ENCODE measurements at regions of chr2 and their contacts with region 1.

Region 1: DNA sequence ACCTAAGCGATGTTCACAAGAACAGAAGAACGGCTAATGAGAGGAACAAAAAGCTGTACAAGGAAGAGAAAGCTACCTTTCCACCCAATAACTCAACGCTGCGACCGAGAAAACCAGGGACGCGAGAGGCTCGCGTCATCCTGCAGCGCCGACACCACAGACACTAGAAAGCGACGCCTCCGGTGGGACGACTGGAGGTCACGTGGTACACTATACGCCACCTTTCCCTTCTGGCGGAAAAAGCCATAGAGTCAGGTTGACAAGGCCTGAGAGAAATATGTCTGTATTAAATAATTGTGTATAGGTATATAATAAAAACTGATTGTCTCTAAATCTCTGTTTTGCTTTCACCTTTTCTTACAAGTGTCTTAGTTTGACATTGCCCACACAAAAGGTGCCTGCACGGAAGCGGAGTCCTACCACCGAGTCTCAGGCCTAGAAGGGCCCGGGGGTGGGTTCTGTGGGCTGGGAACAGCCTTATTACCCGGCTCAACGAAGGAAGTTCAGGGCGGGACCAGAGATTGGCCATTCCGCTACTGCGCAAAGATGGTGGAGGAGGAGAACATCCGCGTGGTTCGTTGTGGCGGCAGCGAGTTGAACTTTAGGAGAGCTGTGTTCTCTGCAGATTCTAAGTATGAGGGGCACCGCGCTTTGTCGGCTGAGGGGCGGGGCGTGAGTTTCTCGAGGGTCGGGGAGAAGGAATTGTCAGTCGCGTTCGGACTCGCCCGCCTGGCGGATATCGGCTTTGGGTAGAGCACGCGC is at the start of gene WDR75:
- DNase-seq: peak; percentile 95
- ATAC-seq: peak; percentile 99
- H3K4me3 ChIP-seq: peak within 1 kb of the TSS; percentile 90 to 94 (median 93)
- H3K27ac ChIP-seq: peak within 1 kb of the TSS; percentile 82
- H3K4me1 ChIP-seq: peaks cover 45% of the 10 kb centered on the region
- H3K27me3 ChIP-seq: no peaks in the 10 kb centered on the region; a peak in 1 of 5 replicates
- CTCF ChIP-seq: no peak
- EP300 ChIP-seq: peak in 1 of 2 experiments; percentile 52; a peak in 2 of 4 replicates
- POLR2A ChIP-seq: peak; percentile 95
- RAD21 ChIP-seq: peak; percentile 27
- total RNA-seq, gene WDR75: 74.1 and 106 TPM in 2 replicates

Region 2: DNA sequence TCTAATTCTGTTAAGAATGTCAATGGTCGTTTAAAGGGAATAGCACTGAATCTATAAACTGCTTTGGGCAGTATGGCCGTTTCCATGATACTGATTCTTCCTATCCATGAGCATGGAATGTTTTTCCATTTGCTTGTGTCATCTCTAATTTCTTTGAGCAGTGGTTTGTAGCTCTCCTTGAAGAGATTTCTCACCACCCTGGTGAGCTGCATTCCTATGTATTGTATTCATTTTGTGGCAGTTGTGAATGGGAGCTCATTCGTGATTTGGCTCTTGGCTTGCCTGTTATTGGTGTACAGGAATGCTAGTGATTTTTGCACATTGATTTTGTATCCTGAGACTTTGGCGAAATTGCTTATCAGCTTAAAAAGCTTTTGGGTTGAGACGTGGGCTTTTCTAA is 38.2 kb before region 1 on chr2:
- CTCF ChIA-PET with region 1: no interaction called
- POLR2A ChIA-PET with region 1: no interaction called
- in situ Hi-C with region 1: no loop called
- intact Hi-C with region 1: no loop called
- DNase-seq: no peak
- ATAC-seq: no peak
- H3K4me3 ChIP-seq: no peak overlapping the region
- H3K27ac ChIP-seq: no peak overlapping the region
- H3K4me1 ChIP-seq: no peaks in the 10 kb centered on the region
- H3K27me3 ChIP-seq: no peaks in the 10 kb centered on the region
- CTCF ChIP-seq: no peak
- EP300 ChIP-seq: no peak
- POLR2A ChIP-seq: no peak
- RAD21 ChIP-seq: no peak

Region 3: DNA sequence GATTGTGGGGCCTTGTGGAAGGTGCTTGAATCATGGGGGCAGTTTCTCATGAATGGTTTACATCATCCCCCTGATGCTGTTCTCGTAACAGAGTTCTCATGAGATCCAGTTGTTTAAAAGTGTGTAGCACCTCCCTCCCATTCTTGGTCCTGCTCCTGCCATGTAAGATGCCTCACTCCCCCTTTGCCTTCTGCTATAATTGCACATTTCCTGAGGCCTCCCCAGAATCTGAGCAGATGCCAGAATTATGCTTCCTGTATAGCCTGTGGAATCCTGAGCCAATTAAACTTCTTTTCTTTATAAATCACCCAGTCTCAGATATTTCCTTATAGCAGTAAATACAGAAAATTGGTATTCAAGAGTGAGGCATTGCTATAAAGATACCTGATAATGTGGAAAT is 15.5 kb before region 1 on chr2:
- CTCF ChIA-PET with region 1: no interaction called
- POLR2A ChIA-PET with region 1: interaction called, 24 read pairs
- in situ Hi-C with region 1: no loop called
- intact Hi-C with region 1: no loop called
- DNase-seq: no peak
- ATAC-seq: no peak
- H3K4me3 ChIP-seq: no peak overlapping the region
- H3K27ac ChIP-seq: no peak overlapping the region
- H3K4me1 ChIP-seq: peaks cover 29% of the 10 kb centered on the region
- H3K27me3 ChIP-seq: no peaks in the 10 kb centered on the region
- CTCF ChIP-seq: no peak
- EP300 ChIP-seq: no peak
- POLR2A ChIP-seq: no peak
- RAD21 ChIP-seq: no peak

Region 4: DNA sequence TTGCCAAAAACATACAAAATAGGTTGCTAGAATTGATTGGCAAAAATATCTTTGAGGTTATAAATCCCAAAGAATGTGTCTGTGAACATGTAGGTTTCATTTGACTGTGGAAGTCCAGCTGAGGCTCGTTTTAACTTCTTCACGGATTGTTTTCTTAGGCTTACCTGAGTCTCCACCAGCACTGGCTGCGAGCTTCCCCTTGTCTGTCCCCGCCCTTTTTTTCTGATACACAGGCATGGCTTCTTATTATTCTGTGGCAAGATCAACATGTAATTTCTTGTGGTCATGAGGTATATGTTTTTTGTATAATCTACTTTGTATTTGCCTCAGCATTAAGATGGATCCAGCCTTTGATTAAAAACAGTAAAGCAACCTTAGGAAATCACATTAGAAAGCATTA is 146.7 kb after region 1 on chr2:
- CTCF ChIA-PET with region 1: no interaction called
- POLR2A ChIA-PET with region 1: no interaction called
- in situ Hi-C with region 1: no loop called
- intact Hi-C with region 1: no loop called
- DNase-seq: no peak
- ATAC-seq: no peak
- H3K4me3 ChIP-seq: no peak overlapping the region
- H3K27ac ChIP-seq: no peak overlapping the region
- H3K4me1 ChIP-seq: peaks cover 12% of the 10 kb centered on the region
- H3K27me3 ChIP-seq: no peaks in the 10 kb centered on the region
- CTCF ChIP-seq: no peak
- EP300 ChIP-seq: no peak
- POLR2A ChIP-seq: no peak
- RAD21 ChIP-seq: no peak

Region 5: GRCh38 chr2:189783927-189784867 is 343.1 kb after region 1 on chr2 and contains the starts of genes ORMDL1 and PMS1:
- CTCF ChIA-PET with region 1: no interaction called
- POLR2A ChIA-PET with region 1: interaction called, 7 read pairs
- in situ Hi-C with region 1: no loop called
- intact Hi-C with region 1: loop called (anchors 5 kb)
- DNase-seq: peak; percentile 93
- ATAC-seq: peak; percentile 97
- H3K4me3 ChIP-seq: peak within 1 kb of the TSS; percentile 79 to 83 (median 81)
- H3K27ac ChIP-seq: peak within 1 kb of the TSS; percentile 94
- H3K4me1 ChIP-seq: peaks cover 36% of the 10 kb centered on the region
- H3K27me3 ChIP-seq: no peaks in the 10 kb centered on the region; a peak in 1 of 5 replicates
- CTCF ChIP-seq: no peak; the same call in 1 of the 2 replicates
- EP300 ChIP-seq: no peak
- POLR2A ChIP-seq: peak; percentile 95 to 98
- RAD21 ChIP-seq: peak; percentile 39; the same call in 1 of the 2 replicates
- total RNA-seq, gene ORMDL1: 29.5 and 67.5 TPM in 2 replicates
- total RNA-seq, gene PMS1: 39.0 and 39.9 TPM in 2 replicates

Measured in HepG2 (cell line).